GM12878 (cell line): ENCODE measurements at regions of chr19 and their contacts with region 1.

Region 1: GRCh38 chr19:50556282-50557008 is 11.8 kb downstream of the LRRC4B start:
- DNase-seq: peak; percentile 15
- ATAC-seq: peak; percentile 95
- H3K4me3 ChIP-seq: peak overlapping the region; percentile 56; the same call in 1 of the 2 replicates
- H3K27ac ChIP-seq: no peak overlapping the region
- H3K4me1 ChIP-seq: no peaks in the 10 kb centered on the region; the same call in 1 of the 2 replicates
- H3K27me3 ChIP-seq: peaks cover 0 to 5% of the 10 kb centered on the region in 2 experiments
- CTCF ChIP-seq: peak; percentile 74 to 93 (median 85)
- EP300 ChIP-seq: no peak
- POLR2A ChIP-seq: no peak
- RAD21 ChIP-seq: peak; percentile 40; the same call in 1 of the 2 replicates

Region 2: DNA sequence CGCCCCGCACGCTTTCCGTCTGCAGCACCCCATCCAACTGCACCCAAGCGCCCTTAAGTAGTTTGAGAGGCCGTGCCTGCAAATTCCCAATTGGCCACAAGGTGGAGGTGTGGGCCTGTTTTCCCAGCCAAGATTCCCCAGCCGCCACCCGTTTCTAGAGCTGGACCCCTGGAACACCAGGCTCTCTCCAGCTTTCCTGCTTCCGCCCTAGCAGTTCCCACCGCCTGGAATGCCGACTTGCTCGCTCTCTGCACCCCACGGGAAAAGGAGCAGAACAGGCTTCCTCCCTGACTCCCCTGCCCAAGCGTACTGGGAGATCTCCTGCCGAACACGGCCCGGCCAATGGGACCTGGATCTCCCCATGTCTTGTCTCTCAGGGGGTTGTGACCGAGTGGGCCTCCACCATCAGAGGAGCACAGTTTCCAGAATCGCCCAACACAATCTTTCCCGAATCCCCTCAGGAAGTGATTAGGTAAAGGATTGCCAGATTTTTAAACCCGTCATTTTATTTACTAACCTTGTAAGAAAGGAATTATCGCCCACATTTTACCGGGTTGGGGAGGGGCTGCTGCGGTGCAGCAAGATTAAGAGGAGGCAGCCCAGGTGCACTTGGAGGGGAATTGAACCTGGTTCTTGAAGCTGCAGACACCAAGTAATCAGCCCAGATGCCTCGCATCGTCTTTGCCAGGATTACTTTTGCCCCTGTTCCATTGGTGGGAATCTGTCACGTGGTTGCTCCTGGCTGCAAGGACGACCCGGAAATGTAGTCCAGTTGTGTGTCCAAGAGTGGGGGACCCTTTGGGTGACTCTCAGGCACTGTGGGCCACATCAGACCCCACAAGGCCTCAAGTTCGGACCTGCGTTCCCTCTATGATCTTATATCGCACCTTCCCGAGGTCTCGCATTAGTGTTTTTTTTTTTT is 187.5 kb before region 1 on chr19:
- CTCF ChIA-PET with region 1: interaction called, 11 read pairs
- POLR2A ChIA-PET with region 1: no interaction called
- RAD21 ChIA-PET with region 1: interaction called, 3 read pairs
- SMC1A ChIA-PET with region 1: no interaction called
- in situ Hi-C with region 1: no loop called
- intact Hi-C with region 1: loop called (anchors 1 kb)
- DNase-seq: peak; percentile 78
- ATAC-seq: peak; percentile 86
- H3K4me3 ChIP-seq: peak overlapping the region; percentile 93
- H3K27ac ChIP-seq: peak overlapping the region; percentile 82
- H3K4me1 ChIP-seq: peaks cover 19% of the 10 kb centered on the region
- H3K27me3 ChIP-seq: no peaks in the 10 kb centered on the region
- CTCF ChIP-seq: peak; percentile 79 to 81 (median 79)
- EP300 ChIP-seq: no peak
- POLR2A ChIP-seq: peak; percentile 69
- RAD21 ChIP-seq: peak; percentile 77